A673 (cell line): ENCODE measurements at regions of chr15 and their contacts with region 1.

Region 1: DNA sequence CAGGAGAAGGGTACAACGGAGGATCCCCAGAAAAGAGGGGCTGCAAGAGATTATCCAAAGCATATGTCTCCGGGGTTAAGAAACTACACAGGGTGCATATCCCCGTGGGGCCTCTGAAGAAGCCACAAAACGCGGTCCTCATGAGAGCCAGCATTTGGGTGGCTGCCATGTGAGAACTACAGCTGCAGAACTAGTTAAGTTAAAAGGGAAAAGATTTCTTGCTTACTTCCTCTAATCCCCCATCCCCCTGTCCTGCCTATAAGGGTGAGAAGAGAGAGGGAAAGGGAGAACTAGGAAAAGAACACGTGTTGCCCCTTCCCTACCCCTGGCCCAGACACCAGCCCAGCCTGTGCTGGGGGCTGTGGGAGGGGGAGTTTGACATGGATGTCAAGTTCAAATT is 70.4 kb upstream of the PCSK6 start:
- DNase-seq: peak; percentile 27
- H3K4me3 ChIP-seq: no peak overlapping the region
- H3K27ac ChIP-seq: no peak overlapping the region
- H3K4me1 ChIP-seq: no peaks in the 10 kb centered on the region
- H3K27me3 ChIP-seq: no peaks in the 10 kb centered on the region
- CTCF ChIP-seq: no peak

Region 2: DNA sequence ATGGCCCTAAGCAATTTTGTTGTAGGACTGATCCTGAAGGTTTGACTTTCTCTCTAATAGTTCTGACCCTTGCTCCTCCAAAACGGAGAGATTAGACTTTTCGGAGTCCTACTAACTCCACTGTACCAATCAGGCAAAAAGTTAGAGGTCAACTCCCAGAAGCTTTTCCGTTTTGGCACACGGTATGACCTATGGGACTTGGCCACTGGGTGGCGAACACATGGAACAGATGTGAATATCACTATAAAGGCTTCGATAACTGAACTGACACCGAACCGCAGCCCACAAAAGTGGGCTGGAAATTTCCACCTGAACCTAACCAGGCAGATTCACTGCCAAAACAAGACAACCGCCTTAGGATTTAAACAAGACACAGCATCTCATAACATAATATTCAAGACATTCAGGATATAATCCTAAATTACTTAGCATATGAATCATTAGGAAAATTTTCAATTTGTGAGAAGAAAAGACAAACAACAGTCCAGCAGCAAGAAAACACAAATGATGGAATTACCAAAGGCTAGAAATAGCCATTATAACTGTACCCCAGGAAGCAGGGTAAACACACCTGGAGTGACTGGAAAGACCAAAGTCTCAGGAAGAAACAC is 104.5 kb after region 1 on chr15:
- CTCF ChIA-PET with region 1: no interaction called
- POLR2A ChIA-PET with region 1: interaction called, 16 read pairs
- intact Hi-C with region 1: no loop called
- DNase-seq: peak; percentile 14
- H3K4me3 ChIP-seq: no peak overlapping the region
- H3K27ac ChIP-seq: no peak overlapping the region
- H3K4me1 ChIP-seq: no peaks in the 10 kb centered on the region
- H3K27me3 ChIP-seq: no peaks in the 10 kb centered on the region
- CTCF ChIP-seq: peak; percentile 48